BJ (cell line): ENCODE measurements at regions of chr4 and their contacts with region 1.

Region 1: DNA sequence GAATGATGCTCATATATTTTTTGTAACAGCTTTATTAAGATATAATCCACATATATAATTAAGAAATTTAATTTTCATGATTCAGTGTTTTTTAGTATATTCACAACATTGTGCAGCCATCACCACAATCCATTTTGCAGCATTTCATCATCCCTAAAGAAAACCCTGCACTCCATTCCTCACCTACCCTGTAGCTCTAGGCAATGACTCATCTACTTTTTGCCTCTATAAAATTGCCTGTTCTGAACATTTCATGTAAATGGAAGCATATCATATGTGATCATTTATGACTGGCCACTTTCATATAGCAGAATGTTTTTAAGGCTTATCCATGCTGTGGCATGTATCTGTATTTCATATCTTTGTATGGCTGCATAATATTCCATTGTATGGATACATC is 339.9 kb downstream of the MAPK10 start:
- DNase-seq: no peak
- H3K4me3 ChIP-seq: no peak overlapping the region
- H3K27me3 ChIP-seq: no peaks in the 10 kb centered on the region
- CTCF ChIP-seq: no peak

Region 2: GRCh38 chr4:86006057-86006456 is 13.8 kb before region 1 on chr4:
- CTCF ChIA-PET with region 1: no interaction called
- POLR2A ChIA-PET with region 1: no interaction called
- DNase-seq: no peak
- H3K4me3 ChIP-seq: no peak overlapping the region
- H3K27me3 ChIP-seq: no peaks in the 10 kb centered on the region
- CTCF ChIP-seq: no peak

Region 3: DNA sequence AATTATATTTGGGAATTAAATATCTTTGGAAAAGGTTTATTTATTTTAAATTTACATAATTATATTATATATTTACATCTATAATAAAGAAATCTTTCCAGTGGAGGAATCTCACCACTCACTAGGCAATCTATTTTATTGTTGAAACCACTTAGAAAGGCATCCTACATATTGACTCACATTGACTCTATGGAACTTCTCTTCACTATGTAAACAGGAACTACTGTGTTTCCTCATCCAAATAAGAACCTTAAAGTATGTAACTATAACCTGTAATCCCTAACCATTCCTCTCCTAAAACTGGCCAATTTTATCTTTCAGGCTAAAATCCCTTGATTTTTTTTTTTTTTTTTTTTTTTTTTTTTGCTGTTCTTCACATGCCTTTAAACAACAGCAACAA is 71.3 kb after region 1 on chr4:
- CTCF ChIA-PET with region 1: no interaction called
- POLR2A ChIA-PET with region 1: interaction called, 12 read pairs
- DNase-seq: no peak
- H3K4me3 ChIP-seq: no peak overlapping the region
- H3K27me3 ChIP-seq: no peaks in the 10 kb centered on the region
- CTCF ChIP-seq: no peak

Region 4: GRCh38 chr4:86367577-86367976 is 347.7 kb after region 1 on chr4:
- CTCF ChIA-PET with region 1: no interaction called
- POLR2A ChIA-PET with region 1: no interaction called
- DNase-seq: no peak
- H3K4me3 ChIP-seq: no peak overlapping the region
- H3K27me3 ChIP-seq: no peaks in the 10 kb centered on the region; the same call in 1 of the 2 replicates
- CTCF ChIP-seq: no peak

Region 5: GRCh38 chr4:86403575-86403974 is 383.7 kb after region 1 on chr4:
- CTCF ChIA-PET with region 1: no interaction called
- POLR2A ChIA-PET with region 1: no interaction called
- DNase-seq: no peak
- H3K4me3 ChIP-seq: no peak overlapping the region
- H3K27me3 ChIP-seq: no peaks in the 10 kb centered on the region
- CTCF ChIP-seq: no peak